ENCODE measurements at regions of chr4 and their contacts with region 1.

Region 1: GRCh38 chr4:2241410-2242353 is at the starts of genes HAUS3 and POLN:
- DNase-seq: peak; percentile 98
- H3K4me3 Mint-ChIP-seq: peak within 1 kb of the TSS; percentile 80
- H3K27ac Mint-ChIP-seq: peak within 1 kb of the TSS; percentile 90
- H3K4me1 Mint-ChIP-seq: peaks cover 43% of the 10 kb centered on the region
- H3K27me3 Mint-ChIP-seq: no peaks in the 10 kb centered on the region
- CTCF ChIP-seq: no peak
- total RNA-seq, gene HAUS3: 13.3 and 13.9 TPM in 2 replicates
- total RNA-seq, gene POLN: 2.8 and 3.1 TPM in 2 replicates

Region 2: DNA sequence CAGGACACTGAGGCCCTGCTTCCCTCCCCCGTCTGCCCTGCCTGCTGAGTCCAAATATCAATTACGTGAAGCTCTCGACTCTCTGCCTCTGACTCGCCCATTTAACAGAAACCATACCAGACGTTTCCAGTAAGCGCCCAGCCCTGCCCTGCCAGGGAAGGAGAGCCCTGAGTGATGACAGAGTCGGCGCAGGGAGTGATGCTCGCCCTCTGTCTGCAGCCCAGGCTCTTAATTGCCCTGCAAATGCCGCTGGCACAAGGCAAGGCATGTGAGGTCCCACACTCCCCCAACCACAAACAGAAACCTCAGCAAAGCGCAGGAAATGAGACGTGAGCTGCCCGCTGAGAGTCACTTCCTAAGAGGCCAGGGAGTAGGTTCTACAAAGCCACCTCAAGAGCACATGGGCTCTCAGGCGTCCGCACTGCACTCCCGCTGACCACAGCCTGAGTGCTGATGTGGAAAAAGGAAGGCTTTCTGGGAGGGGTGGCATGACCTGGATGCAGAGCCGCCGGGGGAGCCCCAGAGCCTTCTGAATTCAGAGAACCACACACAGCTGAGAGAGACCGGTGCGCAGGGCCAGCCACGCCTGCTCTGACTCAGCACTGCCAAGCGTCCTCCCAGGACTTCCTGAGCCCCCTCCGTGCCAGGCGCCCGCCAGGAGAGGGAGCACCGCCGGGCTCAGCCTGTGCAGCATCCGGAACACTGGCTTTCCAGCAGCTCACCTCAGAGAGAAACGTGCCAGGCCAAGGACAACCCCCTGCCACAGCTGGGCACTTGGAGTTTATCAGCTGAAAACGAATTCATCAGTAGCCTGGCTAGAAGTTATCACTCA is 171.4 kb after region 1 on chr4:
- CTCF ChIA-PET with region 1: interaction called, 3 read pairs
- POLR2A ChIA-PET with region 1: interaction called, 4 read pairs
- intact Hi-C with region 1: loop called (anchors 2 kb)
- DNase-seq: peak; percentile 94
- H3K4me3 Mint-ChIP-seq: peak overlapping the region; percentile 71
- H3K27ac Mint-ChIP-seq: peak overlapping the region; percentile 90
- H3K4me1 Mint-ChIP-seq: peaks cover 10% of the 10 kb centered on the region
- H3K27me3 Mint-ChIP-seq: peaks cover 11% of the 10 kb centered on the region
- CTCF ChIP-seq: peak; percentile 52

Region 3: DNA sequence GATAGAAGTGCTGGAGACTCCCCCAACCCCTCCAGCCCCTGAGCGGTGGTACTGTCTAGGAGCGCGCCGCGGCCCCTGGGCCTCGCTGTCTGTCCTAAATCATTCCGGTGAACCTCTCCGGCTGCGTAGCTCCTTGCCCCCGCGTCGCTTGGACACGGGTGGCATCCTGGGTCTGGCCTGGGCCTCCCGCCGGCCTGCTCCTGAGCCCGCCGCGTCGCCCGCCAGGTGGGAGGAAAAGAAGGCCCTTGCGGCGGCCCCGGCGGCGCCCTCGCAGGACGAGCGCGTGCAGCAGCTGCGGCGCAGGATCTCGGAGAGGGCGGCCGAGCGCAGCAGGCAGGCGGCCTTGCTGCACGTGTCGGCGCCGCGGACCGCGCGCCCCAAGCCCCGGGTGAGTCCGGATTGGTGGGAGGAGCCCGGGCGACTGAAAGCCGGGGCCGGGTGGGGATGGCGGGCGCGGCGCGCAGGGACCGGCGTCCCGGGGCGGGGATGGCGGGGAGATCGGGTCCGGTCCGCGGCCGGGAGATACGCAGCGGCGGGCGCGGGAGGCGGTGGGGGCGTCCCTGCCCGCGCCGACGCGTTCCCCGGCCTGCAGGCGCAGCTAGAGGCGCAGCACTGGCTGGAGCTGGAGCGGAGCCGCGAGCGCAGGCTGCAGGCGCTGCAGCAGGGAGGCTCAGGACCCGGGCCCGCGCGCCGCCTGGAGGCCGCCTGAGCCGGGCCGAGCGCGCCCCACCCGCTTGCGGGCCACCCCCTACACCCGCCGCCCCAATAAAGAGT is 220.7 kb after region 1 on chr4:
- CTCF ChIA-PET with region 1: no interaction called
- POLR2A ChIA-PET with region 1: interaction called, 37 read pairs
- intact Hi-C with region 1: loop called (anchors 5 kb)
- DNase-seq: peak; percentile 52
- H3K4me3 Mint-ChIP-seq: peak overlapping the region; percentile 70
- H3K27ac Mint-ChIP-seq: no peak overlapping the region
- H3K4me1 Mint-ChIP-seq: peaks cover 6% of the 10 kb centered on the region
- H3K27me3 Mint-ChIP-seq: no peaks in the 10 kb centered on the region
- CTCF ChIP-seq: peak; percentile 48